ENCODE measurements at regions of chr7 and their contacts with region 1.

Region 1: GRCh38 chr7:36967387-36967786 is 243.1 kb upstream of the AOAH start:
- DNase-seq: peak in 3 of 4 donors; percentile 55 to 75 (median 57)
- ATAC-seq: peak; percentile 94
- H3K4me3 ChIP-seq: no peak overlapping the region
- H3K27ac ChIP-seq: no peak overlapping the region
- H3K4me1 ChIP-seq: peaks cover 0 to 42% of the 10 kb centered on the region in 2 donors
- H3K27me3 ChIP-seq: no peaks in the 10 kb centered on the region
- CTCF ChIP-seq: peak; percentile 76 to 82

Region 2: GRCh38 chr7:37181550-37181932 is 214.2 kb after region 1 on chr7:
- intact Hi-C with region 1: loop called (anchors 10 kb)
- DNase-seq: no peak
- ATAC-seq: no peak
- H3K4me3 ChIP-seq: no peak overlapping the region
- H3K27ac ChIP-seq: no peak overlapping the region
- H3K4me1 ChIP-seq: peaks cover 0 to 3% of the 10 kb centered on the region in 2 donors
- H3K27me3 ChIP-seq: no peaks in the 10 kb centered on the region
- CTCF ChIP-seq: no peak